RWPE1 (cell line): ENCODE measurements at regions of chr12 and their contacts with region 1.

Region 1: DNA sequence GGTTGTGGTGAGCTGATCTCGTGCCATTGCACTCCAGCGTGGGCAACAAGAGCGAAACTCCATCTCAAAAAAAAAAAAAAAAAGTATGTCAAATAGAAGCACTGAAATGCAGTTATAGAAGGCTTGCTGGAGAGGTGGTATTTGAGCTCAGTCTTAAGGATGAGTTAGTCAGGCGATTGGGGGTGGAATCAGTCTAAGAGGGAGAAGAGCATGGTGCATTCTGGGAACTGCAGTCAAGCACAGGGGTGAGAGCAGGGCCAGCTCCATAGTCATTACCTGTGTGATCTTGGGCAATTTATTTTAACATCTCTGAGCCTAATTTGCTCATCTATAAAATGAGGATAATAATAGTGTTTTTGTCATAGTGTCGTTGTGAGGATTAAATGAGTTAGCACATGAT is 5.9 kb upstream of the GNB3 start:
- DNase-seq: no peak
- H3K27ac ChIP-seq: no peak overlapping the region
- CTCF ChIP-seq: no peak

Region 2: GRCh38 chr12:6335451-6336078 is 499.3 kb before region 1 on chr12:
- CTCF ChIA-PET with region 1: no interaction called
- POLR2A ChIA-PET with region 1: no interaction called
- DNase-seq: peak; percentile 53
- H3K27ac ChIP-seq: peak overlapping the region; percentile 97
- CTCF ChIP-seq: peak; percentile 29

Region 3: DNA sequence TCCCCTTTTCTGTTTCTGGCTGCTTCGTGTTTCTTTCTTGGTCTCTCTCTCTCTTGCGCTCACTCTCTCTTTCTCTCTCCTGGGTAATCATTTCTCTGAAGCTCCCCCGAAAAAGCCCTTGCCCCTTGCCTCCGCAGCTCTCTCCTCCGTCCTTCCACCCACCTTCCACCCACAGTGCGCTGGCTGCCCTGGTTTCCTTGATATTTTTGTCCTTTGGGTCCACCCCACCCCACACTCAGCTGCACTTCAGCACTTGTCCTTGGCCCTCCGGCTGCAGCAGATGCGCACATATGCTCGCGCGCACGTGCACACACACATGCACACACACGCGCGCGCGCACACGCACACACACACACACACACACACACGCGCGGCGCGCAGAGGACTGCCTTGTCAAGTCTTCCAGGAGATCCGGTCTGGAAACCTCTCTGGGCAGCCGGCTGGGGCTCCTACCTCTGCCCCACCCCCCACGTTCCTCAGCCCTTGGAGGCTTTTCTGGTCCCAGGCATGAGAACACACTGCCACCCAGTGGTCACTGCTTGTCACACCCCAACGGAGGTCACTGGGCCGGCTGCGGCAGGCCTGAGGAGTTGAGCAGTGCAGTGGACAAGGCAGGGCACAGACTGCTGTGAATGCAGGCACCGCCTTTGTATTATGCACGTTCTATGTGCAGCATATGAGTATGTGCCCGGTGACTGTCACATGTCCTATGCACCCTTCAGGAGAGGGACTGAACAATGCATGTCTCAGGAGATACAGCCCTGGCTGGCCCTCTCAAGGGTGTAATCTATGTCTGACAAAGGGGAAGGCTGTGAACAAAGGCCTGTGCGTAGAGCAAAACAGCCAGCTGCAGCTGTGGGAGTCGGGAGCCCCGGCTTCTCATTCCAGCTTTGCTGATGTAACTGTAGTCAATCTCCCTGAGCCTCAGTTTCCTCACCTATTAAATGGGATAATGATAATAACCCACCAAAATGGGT is 56.0 kb before region 1 on chr12:
- CTCF ChIA-PET with region 1: interaction called, 10 read pairs
- POLR2A ChIA-PET with region 1: no interaction called
- DNase-seq: peak; percentile 80
- H3K27ac ChIP-seq: peak overlapping the region; percentile 42
- CTCF ChIP-seq: peak; percentile 76

Region 4: GRCh38 chr12:6807170-6807569 is 27.7 kb before region 1 on chr12:
- CTCF ChIA-PET with region 1: no interaction called
- POLR2A ChIA-PET with region 1: no interaction called
- DNase-seq: no peak
- H3K27ac ChIP-seq: no peak overlapping the region
- CTCF ChIP-seq: no peak